Activated T-helper 2 cell treated with anti-CD3 and anti-CD28 coated beads, Interferon-gamma antibody, Interleukin-2, Interleukin-4, amounts not matched to agents 10 μg/mL and 5 μg/mL and 100 μg/mL, durations not matched to agents 14 hours and 24 hours and 36 hours (primary cell): ENCODE measurements at regions of chr9 and their contacts with region 1.

Region 1: DNA sequence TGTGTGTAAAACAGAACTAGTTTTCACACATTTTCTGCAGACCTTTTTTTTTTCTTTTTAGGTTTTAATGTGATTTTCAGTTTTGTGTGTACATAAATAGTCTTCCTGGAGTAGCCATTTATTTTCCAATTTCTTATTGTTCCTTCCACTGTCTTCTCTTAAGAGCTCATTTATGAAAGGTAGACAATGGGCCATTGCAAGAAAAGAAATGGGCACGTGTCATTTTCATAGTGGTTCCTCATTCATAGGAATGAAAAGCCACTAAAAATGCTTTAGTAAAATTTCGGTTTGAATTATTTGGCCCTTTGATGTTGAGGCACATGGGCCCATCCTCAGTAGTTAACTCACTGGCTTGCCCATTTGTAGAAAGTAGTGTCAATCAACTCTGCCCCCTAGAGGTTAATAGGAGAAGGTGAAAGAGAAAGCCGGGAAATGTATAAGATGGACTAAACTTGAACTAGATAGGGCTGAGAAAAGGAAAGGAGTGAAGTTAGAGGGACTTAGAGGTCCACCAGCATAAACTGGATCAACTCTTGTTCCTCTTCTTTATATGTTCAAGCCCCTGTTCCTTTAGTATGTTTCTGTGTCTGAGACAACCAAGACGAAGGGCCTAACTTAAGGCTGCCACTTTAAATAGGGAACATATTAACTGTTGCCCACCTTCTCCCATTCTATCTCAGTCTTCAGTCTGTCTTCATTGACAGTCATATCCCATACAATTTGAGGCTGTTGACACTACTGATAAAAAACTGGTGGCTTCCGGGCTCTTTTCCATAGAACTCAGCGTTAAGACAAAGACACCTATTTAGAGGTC is 72.6 kb downstream of the SMARCA2 start:
- DNase-seq: no peak
- H3K4me3 Mint-ChIP-seq: no peak overlapping the region
- H3K27ac Mint-ChIP-seq: peak overlapping the region; percentile 67
- H3K4me1 Mint-ChIP-seq: peaks cover 21% of the 10 kb centered on the region
- H3K27me3 Mint-ChIP-seq: no peaks in the 10 kb centered on the region

Region 2: DNA sequence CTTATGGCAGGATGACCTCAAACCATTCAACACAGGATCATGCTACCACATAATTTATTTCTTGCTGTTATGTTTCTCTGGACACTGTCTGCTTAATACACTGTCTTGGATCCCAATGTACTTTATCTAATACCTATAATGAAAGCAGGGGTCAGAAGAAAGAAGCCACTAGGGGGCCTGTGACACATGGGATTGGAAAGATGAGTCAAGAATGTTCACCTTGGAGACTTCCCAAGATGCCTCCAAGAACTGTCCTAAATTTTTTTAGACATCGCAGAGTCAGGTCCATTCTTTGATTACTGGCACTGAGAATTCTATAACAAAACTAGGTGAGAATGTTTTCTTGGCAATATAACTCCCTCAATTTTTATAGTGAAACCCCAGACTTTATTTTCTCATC is 378.4 kb before region 1 on chr9:
- intact Hi-C with region 1: loop called (anchors 10 kb)
- DNase-seq: no peak
- H3K4me3 Mint-ChIP-seq: no peak overlapping the region
- H3K27ac Mint-ChIP-seq: no peak overlapping the region
- H3K4me1 Mint-ChIP-seq: no peaks in the 10 kb centered on the region
- H3K27me3 Mint-ChIP-seq: peaks cover 6% of the 10 kb centered on the region

Region 3: DNA sequence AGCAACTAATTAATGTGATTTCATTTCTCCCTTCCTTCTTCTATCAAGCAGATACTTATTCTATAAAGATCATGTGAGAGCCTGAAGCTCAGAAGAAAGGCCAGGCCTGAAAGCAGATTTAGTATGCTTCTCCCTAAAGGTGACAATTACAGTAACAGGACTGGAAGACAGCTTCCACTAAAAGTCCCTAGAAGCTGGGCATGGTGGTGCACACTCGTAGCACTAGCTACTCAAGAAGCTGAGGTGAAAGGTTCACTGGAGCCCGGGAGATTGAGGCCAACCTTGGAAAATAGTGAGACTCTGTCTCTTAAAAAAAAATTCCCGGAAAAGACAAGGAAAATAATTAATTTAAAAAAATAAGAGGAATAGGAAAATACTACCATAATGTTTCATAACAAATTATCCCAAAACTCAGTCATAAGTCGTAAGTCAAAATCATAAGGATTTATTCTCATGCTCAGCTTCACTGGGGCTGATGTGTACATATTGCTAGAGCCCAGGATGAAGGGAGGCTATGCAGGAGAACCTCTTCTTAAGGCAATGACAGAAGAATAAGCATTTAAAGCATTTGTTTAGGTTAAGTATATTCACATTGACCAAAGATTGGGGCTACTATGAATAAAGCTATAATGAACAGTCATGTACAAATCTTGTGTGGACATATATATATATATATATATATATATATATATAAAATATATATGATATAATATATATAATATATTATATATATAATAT is 283.4 kb before region 1 on chr9:
- intact Hi-C with region 1: loop called (anchors 10 kb)
- DNase-seq: no peak
- H3K4me3 Mint-ChIP-seq: no peak overlapping the region
- H3K27ac Mint-ChIP-seq: no peak overlapping the region
- H3K4me1 Mint-ChIP-seq: peaks cover 4% of the 10 kb centered on the region
- H3K27me3 Mint-ChIP-seq: no peaks in the 10 kb centered on the region

Region 4: GRCh38 chr9:1869843-1870242 is 217.9 kb before region 1 on chr9:
- intact Hi-C with region 1: loop called (anchors 10 kb)
- DNase-seq: no peak
- H3K4me3 Mint-ChIP-seq: no peak overlapping the region
- H3K27ac Mint-ChIP-seq: no peak overlapping the region
- H3K4me1 Mint-ChIP-seq: no peaks in the 10 kb centered on the region
- H3K27me3 Mint-ChIP-seq: peaks cover 61% of the 10 kb centered on the region

Region 5: DNA sequence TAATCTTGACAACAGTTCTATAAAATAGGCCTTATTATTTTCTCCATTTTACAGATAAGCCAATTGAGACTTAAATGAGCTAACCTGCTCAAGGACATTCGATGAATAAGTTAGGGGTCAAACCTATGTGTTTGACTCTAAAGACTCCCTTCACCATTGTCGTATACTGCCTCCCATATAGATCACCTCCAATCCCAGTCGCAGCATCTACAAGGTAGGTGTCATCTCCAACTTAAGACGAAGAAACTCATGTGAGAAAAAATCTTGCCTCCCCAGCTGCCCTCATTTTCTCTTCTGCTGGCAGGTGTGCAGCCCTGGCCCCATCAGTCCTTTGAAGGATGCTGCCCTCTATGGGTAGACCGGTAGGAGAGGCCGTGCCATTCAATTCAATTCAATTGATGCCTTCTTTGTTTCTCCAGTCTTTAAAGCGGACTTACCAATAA is 147.8 kb before region 1 on chr9:
- intact Hi-C with region 1: loop called (anchors 5 kb)
- DNase-seq: peak; percentile 12
- H3K4me3 Mint-ChIP-seq: no peak overlapping the region
- H3K27ac Mint-ChIP-seq: no peak overlapping the region
- H3K4me1 Mint-ChIP-seq: no peaks in the 10 kb centered on the region
- H3K27me3 Mint-ChIP-seq: peaks cover 6% of the 10 kb centered on the region